ENCODE measurements at regions of chr11 and their contacts with region 1.

Region 1: DNA sequence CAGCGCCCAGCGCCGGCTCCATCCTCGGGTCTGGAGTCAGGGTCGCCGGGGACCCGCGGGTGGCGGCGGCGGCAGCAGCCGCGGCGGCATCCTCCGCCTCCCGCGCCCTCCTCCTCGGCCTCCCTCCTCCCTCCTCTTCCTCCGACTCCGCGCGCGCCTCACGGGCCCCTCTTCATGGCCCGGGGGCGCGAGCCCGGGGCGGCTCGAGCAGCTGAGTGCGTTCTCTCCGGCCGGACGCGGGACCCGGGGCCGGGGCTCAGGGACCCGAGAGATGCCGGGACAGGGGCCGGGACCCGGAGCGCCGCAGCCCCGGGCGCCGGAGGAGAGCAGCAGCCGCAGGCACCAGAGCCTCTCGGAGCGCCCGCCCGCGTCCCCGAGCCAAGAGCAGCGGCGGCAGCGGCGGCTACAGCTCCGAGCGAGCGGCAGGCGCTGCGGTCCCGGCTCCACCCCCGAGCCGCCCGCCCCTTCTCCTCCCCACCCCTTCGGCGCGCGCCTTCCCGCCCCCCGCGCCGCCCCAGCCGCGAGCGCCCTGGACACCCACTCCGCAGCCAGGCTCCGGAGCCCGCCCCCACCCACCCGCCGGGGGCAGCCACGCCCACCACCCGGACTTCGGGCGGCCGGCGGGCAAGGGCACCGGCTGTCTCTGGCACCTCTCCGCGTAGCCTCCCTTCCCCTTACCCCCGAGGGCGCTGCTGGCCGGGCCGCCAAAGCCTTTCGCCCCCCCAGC is at the start of gene CHST1:
- DNase-seq: peak in 6 of 7 donors; percentile 49 to 72 (median 57)
- H3K4me3 ChIP-seq: peak within 1 kb of the TSS in 2 of 4 donors; percentile 32 to 83
- H3K27ac ChIP-seq: peak within 1 kb of the TSS in 2 of 5 donors; percentile 36 to 54
- H3K4me1 ChIP-seq: peaks cover 10 to 11% of the 10 kb centered on the region in 2 donors
- H3K27me3 ChIP-seq: peaks cover 19% of the 10 kb centered on the region
- CTCF ChIP-seq: no peak
- POLR2A ChIP-seq: peak in 1 of 2 donors; percentile 13
- total RNA-seq, gene CHST1: 1.1 to 13.5 (median 4.1) TPM

Region 2: GRCh38 chr11:45411228-45411946 is 254.0 kb before region 1 on chr11:
- intact Hi-C with region 1: loop called in 1 of 2 experiments (anchors 5 kb)
- DNase-seq: no peak
- H3K4me3 ChIP-seq: no peak overlapping the region
- H3K27ac ChIP-seq: peak overlapping the region in 2 of 5 donors; percentile 13 to 54
- H3K4me1 ChIP-seq: peaks cover 6% of the 10 kb centered on the region in 2 donors
- H3K27me3 ChIP-seq: peaks cover 3% of the 10 kb centered on the region
- CTCF ChIP-seq: no peak
- POLR2A ChIP-seq: no peak

Region 3: DNA sequence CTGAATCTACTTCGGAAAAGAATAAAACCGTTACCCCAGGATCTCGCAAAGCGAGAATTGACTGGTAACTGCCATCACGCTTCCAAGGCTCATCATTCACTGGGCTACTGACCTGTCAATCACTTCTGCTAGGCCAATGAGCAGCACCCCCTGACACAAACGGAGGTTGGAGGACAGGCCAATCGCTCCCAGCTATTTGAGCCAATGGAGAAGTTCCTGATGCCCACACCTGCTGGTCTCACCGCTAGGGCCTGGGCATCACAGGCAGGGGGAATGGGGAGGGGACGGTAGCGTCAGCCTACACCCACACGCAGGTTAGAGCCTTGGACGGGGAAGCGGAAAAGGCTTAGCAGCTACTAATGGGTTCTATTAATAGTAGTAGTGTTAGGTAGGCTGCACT is 56.8 kb after region 1 on chr11:
- intact Hi-C with region 1: no loop called
- DNase-seq: no peak
- H3K4me3 ChIP-seq: no peak overlapping the region
- H3K27ac ChIP-seq: no peak overlapping the region
- H3K4me1 ChIP-seq: no peaks in the 10 kb centered on the region
- H3K27me3 ChIP-seq: no peaks in the 10 kb centered on the region
- CTCF ChIP-seq: no peak
- POLR2A ChIP-seq: no peak

Measured in adrenal gland (tissue), 19 donors.